Panc1 (cell line): ENCODE measurements at regions of chr16 and their contacts with region 1.

Region 1: GRCh38 chr16:16021988-16022682 is 72.7 kb downstream of the ABCC1 start:
- DNase-seq: peak; percentile 96
- ATAC-seq: peak; percentile 93
- H3K4me3 ChIP-seq: peak overlapping the region in 1 of 2 experiments; percentile 18; a peak in 1 of 4 replicates
- H3K27ac ChIP-seq: peak overlapping the region; percentile 95
- H3K4me1 ChIP-seq: peaks cover 88% of the 10 kb centered on the region
- H3K27me3 ChIP-seq: no peaks in the 10 kb centered on the region
- CTCF ChIP-seq: no peak

Region 2: DNA sequence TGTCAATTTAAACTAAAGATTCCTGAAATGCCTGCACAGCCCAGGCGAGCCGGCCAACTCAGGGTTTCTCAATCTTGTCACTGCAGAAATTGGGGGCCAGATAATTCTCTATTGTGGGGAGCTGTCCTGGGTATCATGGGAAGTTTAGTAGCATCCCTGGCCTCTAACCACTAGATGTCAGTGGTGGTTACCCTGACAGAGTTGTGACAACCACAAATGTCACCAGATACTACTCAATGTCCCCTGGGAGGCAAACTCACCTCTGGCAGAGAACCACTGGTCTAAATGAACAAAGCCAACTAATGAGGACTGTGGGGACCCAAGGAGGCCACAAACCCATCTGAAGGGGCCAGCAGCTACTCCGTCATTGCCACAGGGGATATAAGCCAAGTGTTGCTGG is 256.3 kb before region 1 on chr16:
- CTCF ChIA-PET with region 1: no interaction called
- POLR2A ChIA-PET with region 1: interaction called, 10 read pairs
- in situ Hi-C with region 1: no loop called
- intact Hi-C with region 1: no loop called
- DNase-seq: peak; percentile 36
- ATAC-seq: peak; percentile 93
- H3K4me3 ChIP-seq: no peak overlapping the region
- H3K27ac ChIP-seq: no peak overlapping the region
- H3K4me1 ChIP-seq: no peaks in the 10 kb centered on the region
- H3K27me3 ChIP-seq: no peaks in the 10 kb centered on the region; the same call in 1 of the 2 replicates
- CTCF ChIP-seq: peak; percentile 94